ENCODE measurements at regions of chr16 and their contacts with region 1.

Region 1: DNA sequence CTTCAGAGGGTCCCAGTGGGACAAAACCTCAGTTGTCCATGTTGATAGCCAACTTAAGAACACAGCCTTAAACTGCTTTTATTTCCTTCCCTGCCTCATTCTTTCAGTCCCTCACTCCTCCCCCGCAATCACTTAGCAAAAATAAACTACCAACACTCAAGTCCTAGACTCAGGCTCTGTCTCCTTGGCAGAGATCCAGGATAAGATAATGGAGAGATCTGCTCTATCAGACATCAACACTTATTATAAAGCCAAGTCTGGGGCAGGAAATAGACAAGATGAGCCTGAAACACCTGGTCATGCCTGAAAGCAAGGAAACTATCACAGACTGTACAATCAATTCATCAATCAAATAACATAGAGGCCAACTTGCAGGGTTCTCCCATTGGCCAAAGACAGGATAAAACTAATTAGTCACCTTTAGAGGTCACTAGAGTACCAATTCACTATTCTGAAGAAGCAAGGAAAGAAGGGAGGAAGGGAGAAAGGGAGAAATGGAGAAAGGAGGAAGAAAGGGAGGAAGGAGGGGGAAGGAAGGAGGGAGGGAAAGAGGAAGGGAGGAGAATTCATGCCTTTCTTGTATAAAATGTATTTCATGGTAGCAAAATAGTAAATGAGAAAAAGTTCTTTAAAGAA is 15.7 kb downstream of the HYDIN start:
- DNase-seq: no peak
- ATAC-seq: no peak
- H3K4me3 ChIP-seq: no peak overlapping the region
- H3K27ac ChIP-seq: no peak overlapping the region
- H3K4me1 ChIP-seq: no peaks in the 10 kb centered on the region
- H3K27me3 ChIP-seq: no peaks in the 10 kb centered on the region
- CTCF ChIP-seq: peak in 1 of 5 experiments; percentile 14
- POLR2A ChIP-seq: no peak

Region 2: DNA sequence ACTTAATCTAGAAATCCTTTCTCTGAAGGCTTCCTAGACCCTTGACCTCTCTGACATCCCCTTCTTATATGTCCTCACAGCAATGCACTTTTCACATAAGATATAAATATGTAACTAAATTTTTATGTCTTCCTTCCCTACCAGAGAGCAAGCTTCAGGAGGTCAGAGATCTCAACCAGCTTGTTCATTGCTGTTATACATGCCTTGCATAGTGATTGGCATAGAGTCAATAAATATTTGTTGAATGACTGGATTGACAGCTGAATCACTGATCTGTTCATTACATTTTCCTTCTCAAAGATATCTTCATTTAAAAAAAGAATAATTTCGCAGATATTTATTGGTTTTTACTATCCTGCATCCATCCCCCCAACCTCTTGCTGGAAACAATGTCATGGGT is 13.8 kb before region 1 on chr16:
- in situ Hi-C with region 1: no loop called
- intact Hi-C with region 1: no loop called
- DNase-seq: no peak
- ATAC-seq: no peak
- H3K4me3 ChIP-seq: no peak overlapping the region
- H3K27ac ChIP-seq: no peak overlapping the region
- H3K4me1 ChIP-seq: no peaks in the 10 kb centered on the region
- H3K27me3 ChIP-seq: no peaks in the 10 kb centered on the region
- CTCF ChIP-seq: no peak
- POLR2A ChIP-seq: no peak

Region 3: GRCh38 chr16:71311553-71312158 is 96.8 kb after region 1 on chr16:
- in situ Hi-C with region 1: loop called in 1 of 4 experiments (anchors 10 kb)
- intact Hi-C with region 1: no loop called
- DNase-seq: no peak
- ATAC-seq: no peak
- H3K4me3 ChIP-seq: no peak overlapping the region
- H3K27ac ChIP-seq: no peak overlapping the region
- H3K4me1 ChIP-seq: no peaks in the 10 kb centered on the region
- H3K27me3 ChIP-seq: no peaks in the 10 kb centered on the region
- CTCF ChIP-seq: peak; percentile 48 to 62 (median 58)
- POLR2A ChIP-seq: no peak

Measured in gastrocnemius medialis (tissue), 4 donors.